ENCODE measurements at regions of chr3 and their contacts with region 1.

Region 1: GRCh38 chr3:179181021-179181472 is 32.9 kb downstream of the PIK3CA start:
- DNase-seq: no peak
- H3K4me3 Mint-ChIP-seq: no peak overlapping the region
- H3K27ac Mint-ChIP-seq: no peak overlapping the region
- H3K4me1 Mint-ChIP-seq: peaks cover 47% of the 10 kb centered on the region
- H3K27me3 Mint-ChIP-seq: no peaks in the 10 kb centered on the region

Region 2: GRCh38 chr3:179158336-179159039 is 22.6 kb before region 1 on chr3:
- CTCF ChIA-PET with region 1: interaction called, 6 read pairs
- intact Hi-C with region 1: loop called (anchors 2 kb)
- DNase-seq: no peak
- H3K4me3 Mint-ChIP-seq: no peak overlapping the region
- H3K27ac Mint-ChIP-seq: no peak overlapping the region
- H3K4me1 Mint-ChIP-seq: peaks cover 54% of the 10 kb centered on the region
- H3K27me3 Mint-ChIP-seq: no peaks in the 10 kb centered on the region

Region 3: DNA sequence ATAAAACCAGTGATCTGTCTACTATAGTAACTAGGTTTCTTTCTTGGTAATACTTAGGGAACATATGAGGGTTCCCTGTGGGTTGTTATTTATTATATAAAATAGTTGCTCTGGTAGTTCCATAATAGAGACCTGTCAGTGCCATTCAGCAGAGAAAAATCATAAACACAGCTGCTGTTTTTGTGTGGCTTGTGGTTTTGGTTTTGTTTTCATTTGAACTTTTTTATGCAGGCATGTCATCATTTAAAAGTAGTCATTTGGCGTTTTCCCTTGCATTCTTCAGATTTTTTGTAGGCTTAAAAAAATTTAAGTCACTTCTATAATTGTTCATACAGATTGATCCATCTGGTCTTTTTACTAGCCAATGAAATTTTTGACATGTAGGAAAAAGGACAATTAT is 15.1 kb after region 1 on chr3:
- CTCF ChIA-PET with region 1: interaction called, 7 read pairs
- intact Hi-C with region 1: loop called (anchors 1 kb)
- DNase-seq: peak; percentile 33
- H3K4me3 Mint-ChIP-seq: no peak overlapping the region
- H3K27ac Mint-ChIP-seq: no peak overlapping the region
- H3K4me1 Mint-ChIP-seq: peaks cover 45% of the 10 kb centered on the region
- H3K27me3 Mint-ChIP-seq: no peaks in the 10 kb centered on the region